HepG2 (cell line): ENCODE measurements at regions of chr19 and their contacts with region 1.

Region 1: GRCh38 chr19:30227661-30228428 is 144.3 kb upstream of the ZNF536 start:
- DNase-seq: peak; percentile 17
- ATAC-seq: peak; percentile 88
- H3K4me3 ChIP-seq: peak overlapping the region; percentile 44 to 66 (median 58); a peak in 4 of 6 replicates
- H3K27ac ChIP-seq: no peak overlapping the region
- H3K4me1 ChIP-seq: peaks cover 18% of the 10 kb centered on the region; the same call in 1 of the 2 replicates
- H3K27me3 ChIP-seq: peaks cover 11 to 73% of the 10 kb centered on the region in 2 experiments; a peak in 4 of 5 replicates
- CTCF ChIP-seq: peak; percentile 65
- EP300 ChIP-seq: no peak
- POLR2A ChIP-seq: no peak
- RAD21 ChIP-seq: 0 out of 2 replicates have a peak, but pooled peaks have one; percentile 29

Region 2: GRCh38 chr19:29404951-29405727 is 822.7 kb before region 1 on chr19:
- CTCF ChIA-PET with region 1: no interaction called
- POLR2A ChIA-PET with region 1: no interaction called
- in situ Hi-C with region 1: no loop called
- intact Hi-C with region 1: loop called (anchors 10 kb)
- DNase-seq: no peak
- ATAC-seq: no peak; the same call in 2 of the 3 replicates
- H3K4me3 ChIP-seq: no peak overlapping the region
- H3K27ac ChIP-seq: no peak overlapping the region
- H3K4me1 ChIP-seq: no peaks in the 10 kb centered on the region
- H3K27me3 ChIP-seq: peaks cover 11 to 37% of the 10 kb centered on the region in 2 experiments; a peak in 4 of 5 replicates
- CTCF ChIP-seq: no peak
- EP300 ChIP-seq: no peak
- POLR2A ChIP-seq: no peak
- RAD21 ChIP-seq: no peak

Region 3: DNA sequence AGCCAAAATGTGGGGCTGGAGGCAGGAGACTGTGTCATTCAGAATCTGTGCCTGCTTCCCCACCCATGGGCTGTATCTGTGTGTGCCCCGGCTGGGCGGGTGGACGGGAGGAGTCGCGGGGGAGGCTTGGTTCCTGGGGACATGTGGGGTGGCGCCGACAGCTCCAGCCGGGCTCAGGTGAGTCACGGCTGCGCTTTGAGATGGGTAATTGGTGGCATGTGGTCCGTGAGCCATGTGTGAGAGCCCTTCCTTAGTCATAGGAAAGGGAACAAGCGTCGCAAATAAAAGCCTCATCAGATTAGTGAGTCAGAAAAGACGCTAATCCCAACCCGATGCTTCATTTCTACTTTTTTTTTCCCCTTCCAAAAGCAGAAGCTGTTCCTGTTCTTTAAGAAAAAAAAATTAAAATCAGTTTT is 25.7 kb after region 1 on chr19:
- CTCF ChIA-PET with region 1: no interaction called
- POLR2A ChIA-PET with region 1: no interaction called
- in situ Hi-C with region 1: no loop called
- intact Hi-C with region 1: no loop called
- DNase-seq: no peak
- ATAC-seq: no peak
- H3K4me3 ChIP-seq: no peak overlapping the region
- H3K27ac ChIP-seq: no peak overlapping the region
- H3K4me1 ChIP-seq: no peaks in the 10 kb centered on the region
- H3K27me3 ChIP-seq: peaks cover 1 to 36% of the 10 kb centered on the region in 2 experiments; a peak in 3 of 5 replicates
- CTCF ChIP-seq: no peak
- EP300 ChIP-seq: no peak
- POLR2A ChIP-seq: no peak
- RAD21 ChIP-seq: no peak

Region 4: GRCh38 chr19:30406220-30407067 is 178.6 kb after region 1 on chr19:
- CTCF ChIA-PET with region 1: no interaction called
- POLR2A ChIA-PET with region 1: no interaction called
- in situ Hi-C with region 1: loop called (anchors 10 kb)
- intact Hi-C with region 1: loop called (anchors 2 kb)
- DNase-seq: peak; percentile 10
- ATAC-seq: peak; percentile 88
- H3K4me3 ChIP-seq: no peak overlapping the region
- H3K27ac ChIP-seq: no peak overlapping the region
- H3K4me1 ChIP-seq: no peaks in the 10 kb centered on the region
- H3K27me3 ChIP-seq: peaks cover 0 to 2% of the 10 kb centered on the region in 2 experiments; a peak in 1 of 5 replicates
- CTCF ChIP-seq: peak; percentile 65
- EP300 ChIP-seq: no peak
- POLR2A ChIP-seq: no peak
- RAD21 ChIP-seq: peak; percentile 62

Region 5: DNA sequence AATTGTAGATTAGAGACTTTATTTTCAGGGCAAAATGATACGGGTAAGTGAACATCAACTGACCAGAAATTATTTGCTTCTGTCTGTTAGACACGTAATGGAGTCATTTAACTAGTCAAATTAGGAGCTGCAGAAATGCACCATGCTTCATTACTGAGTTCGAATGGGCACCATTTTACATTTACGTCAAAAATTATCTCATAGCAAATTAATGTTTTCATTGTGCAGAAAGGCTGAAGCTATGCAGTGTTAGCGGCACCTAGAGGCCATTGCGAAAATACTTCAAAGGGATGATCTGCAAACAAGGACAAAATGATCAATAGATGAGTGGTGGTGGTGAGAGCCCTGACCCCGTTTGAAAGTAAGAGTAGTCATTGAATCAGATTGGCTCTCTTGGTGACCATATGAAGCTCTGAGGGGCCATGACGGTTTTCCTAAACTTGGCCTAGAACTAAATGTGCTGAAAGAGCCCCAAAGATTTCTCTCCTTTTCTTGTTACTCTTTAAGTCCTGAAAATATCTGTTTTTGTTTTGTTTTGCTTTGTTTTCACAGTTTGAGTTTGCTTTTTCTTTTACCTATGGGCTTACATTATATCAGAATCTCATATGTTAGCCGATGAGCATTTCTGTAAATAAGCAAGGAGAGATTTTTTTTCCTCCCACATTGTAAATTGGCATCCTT is 422.2 kb after region 1 on chr19:
- CTCF ChIA-PET with region 1: interaction called, 5 read pairs
- POLR2A ChIA-PET with region 1: no interaction called
- in situ Hi-C with region 1: loop called (anchors 5 kb)
- intact Hi-C with region 1: loop called (anchors 2 kb)
- DNase-seq: peak; percentile 57
- ATAC-seq: peak; percentile 83
- H3K4me3 ChIP-seq: no peak overlapping the region
- H3K27ac ChIP-seq: no peak overlapping the region
- H3K4me1 ChIP-seq: no peaks in the 10 kb centered on the region
- H3K27me3 ChIP-seq: peaks cover 0 to 28% of the 10 kb centered on the region in 2 experiments; a peak in 3 of 5 replicates
- CTCF ChIP-seq: peak; percentile 80
- EP300 ChIP-seq: no peak
- POLR2A ChIP-seq: no peak
- RAD21 ChIP-seq: 0 out of 2 replicates have a peak, but pooled peaks have one; percentile 28